ENCODE measurements at regions of chr10 and their contacts with region 1.

Region 1: GRCh38 chr10:62851442-62851841 is 35.3 kb upstream of the EGR2 start:
- DNase-seq: peak; percentile 51
- ATAC-seq: no peak
- H3K4me3 Mint-ChIP-seq: no peak overlapping the region
- H3K27ac Mint-ChIP-seq: no peak overlapping the region
- H3K4me1 Mint-ChIP-seq: peaks cover 47% of the 10 kb centered on the region
- H3K27me3 Mint-ChIP-seq: peaks cover 20% of the 10 kb centered on the region

Region 2: DNA sequence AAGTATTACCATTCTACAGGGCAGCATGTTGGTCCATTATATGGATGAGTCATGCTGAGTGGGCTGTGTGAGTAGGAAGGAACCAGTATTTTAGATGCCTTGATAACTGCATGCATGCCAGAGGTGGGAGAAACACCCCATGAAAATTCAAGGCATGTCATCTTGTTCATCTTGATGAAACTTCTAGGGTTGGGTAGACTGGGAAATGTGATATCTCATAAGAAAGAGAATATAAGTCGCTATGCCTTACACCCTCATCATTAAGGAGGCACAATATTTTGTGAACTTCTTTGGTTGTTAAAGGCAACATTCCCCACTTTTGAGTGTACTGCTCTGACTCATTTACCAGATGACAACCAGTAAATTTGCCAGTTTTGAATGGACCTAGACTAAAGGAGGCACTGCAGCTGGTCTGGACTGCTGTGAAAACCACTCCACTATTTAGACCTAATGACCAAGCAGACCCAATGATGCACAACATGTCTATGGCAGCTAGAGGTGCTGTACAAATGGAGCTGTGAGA is 429.3 kb before region 1 on chr10:
- CTCF ChIA-PET with region 1: no interaction called
- POLR2A ChIA-PET with region 1: no interaction called
- intact Hi-C with region 1: loop called in 1 of 2 experiments (anchors 5 kb)
- DNase-seq: no peak
- ATAC-seq: no peak
- H3K4me3 Mint-ChIP-seq: no peak overlapping the region
- H3K27ac Mint-ChIP-seq: no peak overlapping the region
- H3K4me1 Mint-ChIP-seq: peaks cover 23% of the 10 kb centered on the region
- H3K27me3 Mint-ChIP-seq: peaks cover 10% of the 10 kb centered on the region

Region 3: GRCh38 chr10:62732841-62733653 is 118.4 kb before region 1 on chr10:
- CTCF ChIA-PET with region 1: no interaction called
- POLR2A ChIA-PET with region 1: no interaction called
- intact Hi-C with region 1: loop called (anchors 1 to 2 kb)
- DNase-seq: peak; percentile 79
- ATAC-seq: peak; percentile 87
- H3K4me3 Mint-ChIP-seq: peak overlapping the region; percentile 3
- H3K27ac Mint-ChIP-seq: no peak overlapping the region
- H3K4me1 Mint-ChIP-seq: peaks cover 25% of the 10 kb centered on the region
- H3K27me3 Mint-ChIP-seq: peaks cover 5% of the 10 kb centered on the region

Region 4: GRCh38 chr10:62980687-62981086 is 129.2 kb after region 1 on chr10:
- CTCF ChIA-PET with region 1: no interaction called
- POLR2A ChIA-PET with region 1: no interaction called
- intact Hi-C with region 1: loop called in 1 of 2 experiments (anchors 1 kb)
- DNase-seq: peak; percentile 60
- ATAC-seq: peak; percentile 91
- H3K4me3 Mint-ChIP-seq: no peak overlapping the region
- H3K27ac Mint-ChIP-seq: peak overlapping the region; percentile 75
- H3K4me1 Mint-ChIP-seq: peaks cover 41% of the 10 kb centered on the region
- H3K27me3 Mint-ChIP-seq: peaks cover 19% of the 10 kb centered on the region

Region 5: GRCh38 chr10:63083904-63084689 is 232.7 kb after region 1 on chr10:
- CTCF ChIA-PET with region 1: interaction called, 3 read pairs
- POLR2A ChIA-PET with region 1: interaction called, 3 read pairs
- intact Hi-C with region 1: loop called (anchors 2 to 10 kb)
- DNase-seq: peak; percentile 62
- ATAC-seq: peak; percentile 78
- H3K4me3 Mint-ChIP-seq: no peak overlapping the region
- H3K27ac Mint-ChIP-seq: no peak overlapping the region
- H3K4me1 Mint-ChIP-seq: no peaks in the 10 kb centered on the region
- H3K27me3 Mint-ChIP-seq: peaks cover 17% of the 10 kb centered on the region

Region 6: GRCh38 chr10:63707254-63707910 is 855.9 kb after region 1 on chr10:
- CTCF ChIA-PET with region 1: no interaction called
- POLR2A ChIA-PET with region 1: no interaction called
- intact Hi-C with region 1: loop called in 1 of 2 experiments (anchors 1 kb)
- DNase-seq: peak; percentile 39
- ATAC-seq: peak; percentile 94
- H3K4me3 Mint-ChIP-seq: no peak overlapping the region
- H3K27ac Mint-ChIP-seq: no peak overlapping the region
- H3K4me1 Mint-ChIP-seq: peaks cover 19% of the 10 kb centered on the region
- H3K27me3 Mint-ChIP-seq: no peaks in the 10 kb centered on the region

Measured in activated CD4-positive, alpha-beta T cell treated with anti-CD3 and anti-CD28 coated beads for 36 hours (primary cell).